ENCODE measurements at regions of chr10 and their contacts with region 1.

Region 1: GRCh38 chr10:115706026-115706781 is 566.8 kb downstream of the GFRA1 start:
- DNase-seq: peak in 5 of 42 donors; percentile 4 to 41 (median 10)

Region 2: GRCh38 chr10:116287906-116288501 is 581.8 kb after region 1 on chr10:
- intact Hi-C with region 1: loop called (anchors 5 kb)
- DNase-seq: peak in 33 of 42 donors; percentile 11 to 81 (median 59)

Measured in head of caudate nucleus (tissue), 42 donors.